ENCODE measurements at regions of chr13 and their contacts with region 1.

Region 1: DNA sequence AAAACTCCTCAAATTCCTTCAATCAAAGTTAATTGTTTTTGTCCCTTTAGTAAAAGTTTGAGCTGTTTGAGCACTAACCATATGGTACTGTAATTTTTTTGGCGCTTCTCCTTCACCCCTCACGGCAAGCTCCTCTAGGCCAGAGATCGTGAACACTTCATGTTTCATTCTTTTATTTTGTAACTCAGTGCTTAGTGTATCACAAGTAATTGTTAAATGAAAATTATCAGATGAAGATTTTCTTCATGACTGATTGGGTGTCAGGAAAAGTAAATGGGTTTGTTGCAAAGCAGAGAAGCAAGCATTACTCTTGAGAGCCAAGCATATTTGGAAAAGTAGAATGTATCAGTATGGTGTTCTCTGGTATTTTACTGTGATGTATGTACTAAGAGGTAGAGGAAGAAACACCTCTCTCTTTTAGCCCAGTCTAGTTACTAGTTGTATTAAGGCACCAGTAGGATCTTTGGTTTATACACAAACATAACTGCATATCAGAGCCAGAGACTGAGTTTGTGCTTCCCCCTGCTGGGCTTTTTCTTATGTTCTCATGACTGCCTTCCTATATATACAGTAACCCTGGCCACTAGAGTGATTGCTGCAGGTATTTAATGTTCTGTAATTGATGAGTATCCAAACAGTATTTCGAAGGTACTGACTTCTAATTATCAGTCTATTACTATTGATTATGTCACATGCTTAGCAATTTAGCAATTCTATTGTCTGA is 202.3 kb upstream of the KLHL1 start:
- DNase-seq: peak in 1 of 5 donors; percentile 15
- ATAC-seq: peak in 2 of 4 donors; percentile 26 to 47
- H3K4me3 ChIP-seq: no peak overlapping the region
- H3K27ac ChIP-seq: no peak overlapping the region
- H3K4me1 ChIP-seq: no peaks in the 10 kb centered on the region
- H3K27me3 ChIP-seq: no peaks in the 10 kb centered on the region
- CTCF ChIP-seq: peak in 4 of 12 donors; percentile 16 to 41 (median 36)
- POLR2A ChIP-seq: no peak

Region 2: GRCh38 chr13:70098669-70099068 is 211.9 kb before region 1 on chr13:
- intact Hi-C with region 1: loop called in 2 of 10 experiments (anchors 5 to 10 kb)
- DNase-seq: no peak
- ATAC-seq: no peak
- H3K4me3 ChIP-seq: no peak overlapping the region
- H3K27ac ChIP-seq: no peak overlapping the region
- H3K4me1 ChIP-seq: no peaks in the 10 kb centered on the region
- H3K27me3 ChIP-seq: no peaks in the 10 kb centered on the region
- CTCF ChIP-seq: peak in 6 of 12 donors; percentile 13 to 36 (median 25)
- POLR2A ChIP-seq: no peak

Region 3: GRCh38 chr13:70104481-70104880 is 206.1 kb before region 1 on chr13:
- intact Hi-C with region 1: loop called in 2 of 10 experiments (anchors 5 to 10 kb)
- DNase-seq: no peak
- ATAC-seq: no peak
- H3K4me3 ChIP-seq: no peak overlapping the region
- H3K27ac ChIP-seq: no peak overlapping the region
- H3K4me1 ChIP-seq: peaks cover 0 to 9% (median 0%) of the 10 kb centered on the region in 12 donors
- H3K27me3 ChIP-seq: peaks cover 0 to 15% (median 0%) of the 10 kb centered on the region in 9 donors
- CTCF ChIP-seq: no peak
- POLR2A ChIP-seq: no peak

Region 4: GRCh38 chr13:70405266-70405665 is 94.7 kb after region 1 on chr13:
- intact Hi-C with region 1: no loop called
- DNase-seq: no peak
- ATAC-seq: no peak
- H3K4me3 ChIP-seq: no peak overlapping the region
- H3K27ac ChIP-seq: no peak overlapping the region
- H3K4me1 ChIP-seq: no peaks in the 10 kb centered on the region
- H3K27me3 ChIP-seq: no peaks in the 10 kb centered on the region
- CTCF ChIP-seq: no peak
- POLR2A ChIP-seq: no peak

Region 5: GRCh38 chr13:70505834-70506461 is 195.4 kb after region 1 on chr13:
- intact Hi-C with region 1: no loop called
- DNase-seq: no peak
- ATAC-seq: no peak
- H3K4me3 ChIP-seq: no peak overlapping the region
- H3K27ac ChIP-seq: no peak overlapping the region
- H3K4me1 ChIP-seq: no peaks in the 10 kb centered on the region
- H3K27me3 ChIP-seq: no peaks in the 10 kb centered on the region
- CTCF ChIP-seq: no peak
- POLR2A ChIP-seq: no peak

Measured in heart left ventricle (tissue), 16 donors.